Activated CD4-positive, alpha-beta memory T cell treated with anti-CD3 and anti-CD28 coated beads, Interleukin-2, amount 10 ng/mL, durations not matched to agents 7 days and 5 days (primary cell): ENCODE measurements at regions of chr17 and their contacts with region 1.

Region 1: DNA sequence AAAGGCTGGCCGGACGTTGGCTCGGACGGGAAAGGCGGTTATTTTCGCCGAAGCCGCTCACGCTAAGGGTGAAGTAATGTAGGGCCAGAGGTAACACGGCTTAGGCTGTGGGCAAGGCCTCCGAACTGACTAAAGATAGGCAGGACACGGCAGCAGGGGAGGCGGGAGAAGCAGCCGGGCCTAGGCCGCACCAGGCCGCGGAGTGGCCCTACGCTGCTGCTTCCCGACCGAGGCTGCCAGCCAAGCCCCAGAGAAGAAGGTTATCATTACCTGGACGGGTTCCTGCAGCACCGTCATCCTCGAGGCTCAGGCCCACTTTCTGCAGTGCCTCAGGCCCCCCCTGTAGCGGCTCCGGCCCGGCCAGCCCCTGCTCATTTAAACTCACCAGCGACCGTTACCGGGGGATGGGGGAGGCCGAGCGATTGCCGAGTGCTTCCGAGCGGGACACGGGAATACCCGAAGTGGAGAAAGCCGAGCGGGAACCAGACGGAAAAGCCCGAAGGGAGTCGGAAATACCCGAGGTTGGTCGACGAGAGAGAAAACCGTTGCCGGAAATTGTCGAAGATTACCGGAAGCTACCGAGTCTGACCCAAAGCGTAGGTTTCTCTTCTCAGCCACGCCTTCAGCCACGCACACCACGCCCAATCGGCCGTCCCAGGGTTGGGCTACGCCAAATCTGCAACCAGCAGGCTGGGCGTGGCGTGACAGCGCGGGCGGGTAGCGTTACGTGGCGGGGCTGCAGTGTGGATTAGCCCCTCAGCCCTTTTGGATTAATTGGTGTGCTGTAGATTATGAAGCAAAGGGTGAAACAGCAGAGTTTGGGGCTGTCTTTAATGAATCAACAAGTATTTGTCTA is at the start of gene CDC27:
- DNase-seq: peak; percentile 100
- H3K4me3 Mint-ChIP-seq: peak within 1 kb of the TSS; percentile 96
- H3K27ac Mint-ChIP-seq: peak within 1 kb of the TSS; percentile 95
- H3K4me1 Mint-ChIP-seq: peaks cover 59% of the 10 kb centered on the region
- H3K27me3 Mint-ChIP-seq: no peaks in the 10 kb centered on the region
- total RNA-seq, gene CDC27: 138 to 140 TPM

Region 2: GRCh38 chr17:47199627-47200324 is 10.7 kb after region 1 on chr17:
- CTCF ChIA-PET with region 1: interaction called, 18 read pairs
- POLR2A ChIA-PET with region 1: interaction called, 138 read pairs
- DNase-seq: no peak
- H3K4me3 Mint-ChIP-seq: no peak overlapping the region
- H3K27ac Mint-ChIP-seq: peak overlapping the region; percentile 40
- H3K4me1 Mint-ChIP-seq: peaks cover 29% of the 10 kb centered on the region
- H3K27me3 Mint-ChIP-seq: peaks cover 6% of the 10 kb centered on the region

Region 3: GRCh38 chr17:47205419-47205963 is 16.4 kb after region 1 on chr17:
- CTCF ChIA-PET with region 1: interaction called, 18 read pairs
- POLR2A ChIA-PET with region 1: interaction called, 138 read pairs
- DNase-seq: peak; percentile 81
- H3K4me3 Mint-ChIP-seq: peak overlapping the region; percentile 70
- H3K27ac Mint-ChIP-seq: peak overlapping the region; percentile 96
- H3K4me1 Mint-ChIP-seq: peaks cover 49% of the 10 kb centered on the region
- H3K27me3 Mint-ChIP-seq: no peaks in the 10 kb centered on the region

Region 4: DNA sequence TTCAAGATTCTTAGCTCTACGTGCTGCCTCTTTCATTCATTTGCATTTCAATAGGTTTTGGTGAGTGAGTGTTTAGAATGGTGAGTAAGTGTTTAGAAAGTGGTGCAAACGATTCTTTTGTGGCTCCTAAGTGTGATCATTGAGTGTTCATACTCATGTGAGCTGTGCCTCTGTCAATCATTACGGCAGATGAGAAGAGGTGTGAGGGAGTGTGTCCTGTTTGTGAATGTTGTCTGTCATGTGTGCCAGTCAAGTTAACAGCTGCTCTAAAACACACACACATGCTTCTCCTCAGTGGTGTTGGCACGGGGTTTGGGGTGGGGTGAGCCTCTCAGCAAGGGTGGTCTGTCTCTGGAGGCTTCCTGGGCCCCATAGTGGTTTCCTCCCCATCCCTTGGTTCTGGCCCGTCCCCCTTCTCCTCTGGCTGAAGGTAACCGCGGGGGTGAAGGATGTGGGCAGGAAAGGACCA is 31.5 kb after region 1 on chr17:
- CTCF ChIA-PET with region 1: interaction called, 4 read pairs
- POLR2A ChIA-PET with region 1: interaction called, 11 read pairs
- DNase-seq: peak; percentile 43
- H3K4me3 Mint-ChIP-seq: no peak overlapping the region
- H3K27ac Mint-ChIP-seq: peak overlapping the region; percentile 77
- H3K4me1 Mint-ChIP-seq: peaks cover 52% of the 10 kb centered on the region
- H3K27me3 Mint-ChIP-seq: no peaks in the 10 kb centered on the region